Activated CD4-positive, alpha-beta T cell treated with anti-CD3 and anti-CD28 coated beads for 36 hours (primary cell): ENCODE measurements at regions of chr11 and their contacts with region 1.

Region 1: GRCh38 chr11:110349138-110349996 is 53.0 kb upstream of the RDX start:
- DNase-seq: peak; percentile 90
- ATAC-seq: peak; percentile 77
- H3K4me3 Mint-ChIP-seq: peak overlapping the region; percentile 51
- H3K27ac Mint-ChIP-seq: peak overlapping the region; percentile 98
- H3K4me1 Mint-ChIP-seq: peaks cover 64% of the 10 kb centered on the region
- H3K27me3 Mint-ChIP-seq: no peaks in the 10 kb centered on the region

Region 2: DNA sequence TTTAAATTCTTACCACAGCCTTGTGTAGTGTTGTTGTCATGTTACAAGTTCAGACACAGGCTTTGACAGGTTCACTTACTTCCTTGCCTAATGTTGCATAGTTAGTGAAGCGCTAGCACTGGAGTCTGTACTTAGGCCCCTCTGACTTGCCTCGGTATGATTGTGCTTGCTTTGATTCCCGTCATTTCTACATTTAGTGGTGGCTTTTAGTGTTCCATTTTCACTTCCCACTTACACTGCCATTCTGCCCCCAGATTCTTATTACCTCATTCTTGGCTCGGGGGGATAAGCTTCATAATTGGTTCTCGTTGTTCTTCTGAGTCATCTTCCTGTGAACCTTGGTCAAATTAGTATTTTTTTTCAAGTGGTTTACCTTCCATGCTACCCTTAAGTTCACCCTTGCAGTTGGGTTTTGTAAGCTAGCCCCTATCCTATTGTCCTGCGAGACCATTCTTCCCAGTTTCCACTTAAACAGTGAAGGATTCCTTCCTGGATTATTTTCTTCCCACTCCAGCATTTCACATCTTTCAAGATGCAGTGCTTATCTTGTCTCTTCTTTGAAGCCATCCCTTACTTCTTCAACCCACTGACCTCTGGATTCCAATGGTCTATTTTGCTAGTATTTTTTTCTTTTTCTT is 1615.8 kb before region 1 on chr11:
- CTCF ChIA-PET with region 1: no interaction called
- POLR2A ChIA-PET with region 1: no interaction called
- intact Hi-C with region 1: loop called in 1 of 2 experiments (anchors 10 kb)
- DNase-seq: peak; percentile 65
- ATAC-seq: peak; percentile 99
- H3K4me3 Mint-ChIP-seq: no peak overlapping the region
- H3K27ac Mint-ChIP-seq: peak overlapping the region; percentile 81
- H3K4me1 Mint-ChIP-seq: peaks cover 56% of the 10 kb centered on the region
- H3K27me3 Mint-ChIP-seq: no peaks in the 10 kb centered on the region

Region 3: DNA sequence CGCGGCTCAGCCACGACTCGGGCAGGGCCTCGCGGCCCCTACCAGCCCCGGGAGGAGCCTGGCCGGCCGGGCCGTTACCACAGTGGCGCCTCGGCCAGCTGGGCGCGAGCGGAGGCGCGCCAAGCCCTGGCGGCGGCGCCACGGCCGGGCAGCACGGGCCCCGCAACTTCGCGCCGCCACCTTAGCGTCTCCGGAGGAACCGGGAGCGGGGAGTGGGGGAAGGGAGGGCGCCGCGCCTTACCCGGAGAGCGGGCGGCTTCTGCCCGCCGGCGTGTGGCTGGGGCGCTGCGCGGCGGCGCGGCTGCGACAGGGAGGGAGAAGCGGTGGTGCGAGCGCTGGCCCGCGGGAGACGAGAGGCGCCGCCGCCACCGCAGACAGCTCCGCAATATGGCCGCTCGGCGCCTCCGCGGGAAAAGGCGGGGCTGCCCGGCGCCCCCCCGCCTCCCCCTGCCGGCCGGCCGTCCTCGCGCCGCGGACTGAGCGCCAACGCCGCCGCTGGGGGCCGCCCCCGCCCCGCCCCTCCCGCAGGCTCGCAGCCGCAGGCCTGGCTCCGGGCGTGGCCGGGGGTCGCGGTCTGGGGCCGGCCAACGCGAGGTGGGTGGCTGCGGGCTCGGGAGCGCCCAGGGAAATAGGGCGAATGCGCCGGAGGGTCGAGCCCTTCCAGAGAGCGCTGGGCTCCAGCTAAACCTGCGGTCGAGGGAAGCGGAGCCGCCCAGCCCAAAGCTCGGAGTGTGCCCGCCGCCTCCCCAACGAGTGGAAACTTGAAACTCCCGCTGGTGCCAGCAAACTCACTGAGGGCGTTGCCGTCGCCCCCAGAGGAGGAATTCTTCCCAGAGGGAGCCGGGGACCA is 52.9 kb before region 1 on chr11 and contains the start of gene RDX:
- CTCF ChIA-PET with region 1: interaction called, 5 read pairs
- POLR2A ChIA-PET with region 1: interaction called, 5 read pairs
- intact Hi-C with region 1: loop called (anchors 1 kb)
- DNase-seq: peak; percentile 77
- ATAC-seq: peak; percentile 70
- H3K4me3 Mint-ChIP-seq: peak within 1 kb of the TSS; percentile 85
- H3K27ac Mint-ChIP-seq: peak within 1 kb of the TSS; percentile 88
- H3K4me1 Mint-ChIP-seq: peaks cover 39% of the 10 kb centered on the region
- H3K27me3 Mint-ChIP-seq: no peaks in the 10 kb centered on the region
- total RNA-seq, gene RDX: 53.9 to 61.7 TPM

Region 4: GRCh38 chr11:110327508-110327907 is 21.9 kb before region 1 on chr11:
- CTCF ChIA-PET with region 1: interaction called, 4 read pairs
- POLR2A ChIA-PET with region 1: interaction called, 17 read pairs
- intact Hi-C with region 1: loop called (anchors 1 kb)
- DNase-seq: no peak
- ATAC-seq: no peak
- H3K4me3 Mint-ChIP-seq: peak overlapping the region; percentile 76
- H3K27ac Mint-ChIP-seq: peak overlapping the region; percentile 47
- H3K4me1 Mint-ChIP-seq: peaks cover 24% of the 10 kb centered on the region
- H3K27me3 Mint-ChIP-seq: no peaks in the 10 kb centered on the region

Region 5: GRCh38 chr11:110376711-110377324 is 27.5 kb after region 1 on chr11:
- CTCF ChIA-PET with region 1: interaction called, 13 read pairs
- POLR2A ChIA-PET with region 1: interaction called, 23 read pairs
- intact Hi-C with region 1: loop called (anchors 1 kb)
- DNase-seq: peak; percentile 37
- ATAC-seq: peak; percentile 10
- H3K4me3 Mint-ChIP-seq: no peak overlapping the region
- H3K27ac Mint-ChIP-seq: no peak overlapping the region
- H3K4me1 Mint-ChIP-seq: peaks cover 17% of the 10 kb centered on the region
- H3K27me3 Mint-ChIP-seq: peaks cover 3% of the 10 kb centered on the region

Region 6: DNA sequence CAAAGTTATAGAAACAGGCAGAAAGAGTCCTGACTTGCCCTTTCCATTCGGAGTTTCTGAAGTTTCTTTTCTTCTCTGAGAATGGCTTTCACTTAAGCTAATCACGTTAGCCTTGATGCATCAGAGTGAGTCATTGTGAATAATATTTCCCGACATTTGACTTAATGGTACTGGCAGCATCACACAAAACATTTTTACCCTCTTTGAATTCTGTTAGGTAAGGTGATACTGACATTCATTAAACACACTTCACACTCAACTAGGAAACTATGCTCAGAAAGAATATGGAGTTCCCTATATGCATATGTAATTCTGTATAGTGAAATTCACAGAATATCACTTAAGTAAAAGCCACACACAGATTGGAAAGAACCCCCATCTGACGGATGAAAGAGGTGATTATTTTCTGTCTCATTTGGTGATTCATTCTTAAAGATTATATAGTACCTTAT is 483.7 kb after region 1 on chr11:
- CTCF ChIA-PET with region 1: no interaction called
- POLR2A ChIA-PET with region 1: no interaction called
- intact Hi-C with region 1: loop called in 1 of 2 experiments (anchors 5 kb)
- DNase-seq: no peak
- ATAC-seq: peak; percentile 84
- H3K4me3 Mint-ChIP-seq: no peak overlapping the region
- H3K27ac Mint-ChIP-seq: peak overlapping the region; percentile 98
- H3K4me1 Mint-ChIP-seq: peaks cover 35% of the 10 kb centered on the region
- H3K27me3 Mint-ChIP-seq: peaks cover 3% of the 10 kb centered on the region

Region 7: DNA sequence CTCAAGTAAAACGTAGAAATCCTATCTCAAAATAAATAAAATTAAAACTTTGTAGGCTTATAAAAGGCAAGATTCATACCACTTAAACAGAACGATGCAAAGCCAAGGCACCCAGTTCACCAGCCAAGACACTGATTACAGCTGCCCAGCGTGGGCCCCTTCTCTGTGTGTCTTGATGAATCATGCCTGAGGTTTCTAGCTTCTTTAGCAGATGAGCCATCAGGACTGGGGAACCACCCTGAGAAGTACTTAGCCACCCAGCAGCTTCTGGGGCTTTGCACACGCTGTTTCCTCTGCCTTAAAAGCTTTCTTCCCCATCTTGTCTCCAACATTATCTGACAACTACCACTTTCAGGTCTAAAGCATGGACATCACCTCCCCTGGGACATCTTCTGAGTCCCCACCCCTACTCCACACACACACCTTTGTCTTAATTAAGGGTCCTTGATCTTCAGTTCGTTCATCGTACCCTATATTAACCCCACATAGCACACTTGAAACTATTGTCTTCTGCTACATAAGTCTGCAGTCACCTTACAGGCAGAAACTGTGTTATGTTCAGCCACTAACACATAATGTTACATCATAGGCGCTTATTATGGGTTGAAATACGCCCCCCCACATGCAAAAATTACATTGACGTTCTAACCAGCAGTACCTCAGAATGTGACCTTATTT is 1182.5 kb after region 1 on chr11:
- CTCF ChIA-PET with region 1: no interaction called
- POLR2A ChIA-PET with region 1: no interaction called
- intact Hi-C with region 1: loop called in 1 of 2 experiments (anchors 5 kb)
- DNase-seq: peak; percentile 88
- ATAC-seq: peak; percentile 96
- H3K4me3 Mint-ChIP-seq: no peak overlapping the region
- H3K27ac Mint-ChIP-seq: peak overlapping the region; percentile 59
- H3K4me1 Mint-ChIP-seq: peaks cover 43% of the 10 kb centered on the region
- H3K27me3 Mint-ChIP-seq: peaks cover 9% of the 10 kb centered on the region